GM12878 (cell line): ENCODE measurements at regions of chr6 and their contacts with region 1.

Region 1: DNA sequence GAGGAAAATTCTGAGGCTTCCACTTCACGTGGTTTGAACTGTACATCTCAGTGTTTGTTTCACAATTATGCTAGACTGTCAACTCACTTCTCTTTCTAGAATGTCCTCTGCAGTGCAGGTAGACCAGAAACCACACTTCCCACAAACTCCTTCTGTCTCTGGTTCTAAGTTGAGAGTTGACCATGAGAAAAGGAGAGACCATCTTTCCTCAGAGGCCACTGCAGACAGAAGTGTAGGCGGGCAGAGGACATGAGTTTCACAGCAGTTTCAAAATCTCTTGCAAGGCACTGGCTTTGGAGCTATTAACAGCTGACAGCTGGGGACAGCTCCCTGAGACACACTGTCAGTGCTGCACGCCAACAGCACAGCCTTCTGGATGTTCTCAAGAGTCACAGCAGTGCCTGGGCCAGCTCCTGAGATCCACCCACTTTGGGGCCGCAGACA is 55.4 kb upstream of the MOXD1 start:
- DNase-seq: peak; percentile 90
- ATAC-seq: peak; percentile 89
- H3K4me3 ChIP-seq: no peak overlapping the region
- H3K27ac ChIP-seq: no peak overlapping the region; the same call in 1 of the 2 replicates
- H3K4me1 ChIP-seq: peaks cover 33% of the 10 kb centered on the region
- H3K27me3 ChIP-seq: no peaks in the 10 kb centered on the region
- CTCF ChIP-seq: peak; percentile 45 to 62 (median 57); a peak in 5 of 6 replicates
- EP300 ChIP-seq: peak in 1 of 2 experiments; percentile 66; a peak in 2 of 4 replicates
- POLR2A ChIP-seq: no peak
- RAD21 ChIP-seq: peak; percentile 84

Region 2: GRCh38 chr6:132209351-132209750 is 247.4 kb before region 1 on chr6:
- CTCF ChIA-PET with region 1: no interaction called
- POLR2A ChIA-PET with region 1: no interaction called
- RAD21 ChIA-PET with region 1: no interaction called
- SMC1A ChIA-PET with region 1: no interaction called
- in situ Hi-C with region 1: no loop called
- intact Hi-C with region 1: no loop called
- DNase-seq: no peak
- ATAC-seq: no peak
- H3K4me3 ChIP-seq: no peak overlapping the region
- H3K27ac ChIP-seq: no peak overlapping the region
- H3K4me1 ChIP-seq: no peaks in the 10 kb centered on the region
- H3K27me3 ChIP-seq: peaks cover 0 to 1% of the 10 kb centered on the region in 2 experiments; a peak in 3 of 4 replicates
- CTCF ChIP-seq: no peak
- EP300 ChIP-seq: no peak
- POLR2A ChIP-seq: no peak
- RAD21 ChIP-seq: no peak

Region 3: DNA sequence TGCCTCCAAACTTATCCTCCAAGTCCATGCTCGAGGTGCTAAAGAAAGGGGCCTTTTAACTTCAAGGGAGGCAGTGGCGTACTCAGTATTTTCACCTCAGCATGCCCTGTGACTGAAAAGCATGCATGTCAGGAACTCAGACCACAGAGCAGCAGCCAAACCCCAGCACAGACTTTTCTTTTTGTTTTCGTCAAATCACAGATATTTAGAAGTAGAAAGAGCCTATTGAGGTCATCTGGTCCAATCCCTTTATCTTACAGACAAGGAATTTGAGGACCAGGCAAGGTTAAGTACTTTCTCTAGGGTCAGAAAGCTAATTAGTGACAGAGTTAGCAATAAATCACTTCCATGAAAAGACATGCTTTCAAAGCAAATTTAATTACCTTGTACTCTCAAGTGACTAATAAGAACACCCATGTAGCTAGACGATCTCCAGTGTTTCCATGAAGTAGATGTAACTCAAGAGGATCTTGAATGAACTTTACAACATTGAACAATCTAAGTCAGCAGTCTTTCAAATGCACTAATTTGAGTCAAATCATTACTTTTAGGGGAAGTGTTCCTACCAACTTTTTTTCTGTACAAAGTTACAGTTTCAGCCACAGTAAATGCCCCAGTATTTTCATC is 91.3 kb before region 1 on chr6:
- CTCF ChIA-PET with region 1: interaction called, 5 read pairs
- POLR2A ChIA-PET with region 1: no interaction called
- RAD21 ChIA-PET with region 1: interaction called, 3 read pairs
- SMC1A ChIA-PET with region 1: interaction called, 3 read pairs
- in situ Hi-C with region 1: no loop called
- intact Hi-C with region 1: loop called (anchors 1 kb)
- DNase-seq: peak; percentile 81
- ATAC-seq: peak; percentile 96
- H3K4me3 ChIP-seq: no peak overlapping the region
- H3K27ac ChIP-seq: 0 out of 2 replicates have a peak overlapping the region, but pooled peaks have one; percentile 35
- H3K4me1 ChIP-seq: peaks cover 17% of the 10 kb centered on the region; the same call in 1 of the 2 replicates
- H3K27me3 ChIP-seq: peaks cover 0 to 3% of the 10 kb centered on the region in 2 experiments; a peak in 2 of 4 replicates
- CTCF ChIP-seq: no peak
- EP300 ChIP-seq: peak; percentile 96 to 99
- POLR2A ChIP-seq: no peak
- RAD21 ChIP-seq: no peak

Region 4: GRCh38 chr6:132401120-132401945 is 55.4 kb before region 1 on chr6 and contains the start of gene MOXD1:
- CTCF ChIA-PET with region 1: interaction called, 13 read pairs
- POLR2A ChIA-PET with region 1: interaction called, 5 read pairs
- RAD21 ChIA-PET with region 1: no interaction called
- SMC1A ChIA-PET with region 1: no interaction called
- in situ Hi-C with region 1: no loop called
- intact Hi-C with region 1: loop called (anchors 2 kb)
- DNase-seq: no peak
- ATAC-seq: peak; percentile 66
- H3K4me3 ChIP-seq: peak within 1 kb of the TSS; percentile 74
- H3K27ac ChIP-seq: peak within 1 kb of the TSS; percentile 22
- H3K4me1 ChIP-seq: peaks cover 22% of the 10 kb centered on the region
- H3K27me3 ChIP-seq: peaks cover 0 to 5% of the 10 kb centered on the region in 2 experiments; a peak in 2 of 4 replicates
- CTCF ChIP-seq: no peak
- EP300 ChIP-seq: no peak
- POLR2A ChIP-seq: 0 out of 2 replicates have a peak, but pooled peaks have one; percentile 18
- RAD21 ChIP-seq: no peak
- polyA plus RNA-seq, gene MOXD1: 0.03 to 0.27 TPM

Region 5: DNA sequence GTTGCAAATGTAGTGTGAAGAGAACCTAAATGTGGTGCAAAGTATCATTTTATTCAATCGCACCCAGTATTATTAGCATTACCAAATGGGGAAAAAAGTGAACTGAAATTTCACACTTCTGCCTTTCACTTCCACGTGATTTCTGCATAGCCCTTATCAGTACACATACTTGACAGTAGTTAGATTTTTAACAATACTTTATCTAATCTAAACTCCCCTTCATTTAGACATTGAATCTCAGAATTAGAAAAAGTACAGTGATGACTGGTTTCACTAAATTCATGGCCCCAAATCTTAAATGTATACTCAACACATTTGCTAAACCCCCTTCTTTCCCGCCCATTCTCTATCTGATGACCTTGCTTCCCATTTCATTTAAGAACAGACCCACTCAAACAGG is 41.9 kb after region 1 on chr6:
- CTCF ChIA-PET with region 1: interaction called, 3 read pairs
- POLR2A ChIA-PET with region 1: no interaction called
- RAD21 ChIA-PET with region 1: interaction called, 7 read pairs
- SMC1A ChIA-PET with region 1: interaction called, 9 read pairs
- in situ Hi-C with region 1: no loop called
- intact Hi-C with region 1: loop called (anchors 5 kb)
- DNase-seq: peak; percentile 60
- ATAC-seq: peak; percentile 75
- H3K4me3 ChIP-seq: peak overlapping the region; percentile 22; the same call in 1 of the 2 replicates
- H3K27ac ChIP-seq: peak overlapping the region; percentile 76
- H3K4me1 ChIP-seq: peaks cover 53% of the 10 kb centered on the region
- H3K27me3 ChIP-seq: no peaks in the 10 kb centered on the region
- CTCF ChIP-seq: no peak
- EP300 ChIP-seq: peak; percentile 87 to 97
- POLR2A ChIP-seq: no peak
- RAD21 ChIP-seq: no peak

Region 6: DNA sequence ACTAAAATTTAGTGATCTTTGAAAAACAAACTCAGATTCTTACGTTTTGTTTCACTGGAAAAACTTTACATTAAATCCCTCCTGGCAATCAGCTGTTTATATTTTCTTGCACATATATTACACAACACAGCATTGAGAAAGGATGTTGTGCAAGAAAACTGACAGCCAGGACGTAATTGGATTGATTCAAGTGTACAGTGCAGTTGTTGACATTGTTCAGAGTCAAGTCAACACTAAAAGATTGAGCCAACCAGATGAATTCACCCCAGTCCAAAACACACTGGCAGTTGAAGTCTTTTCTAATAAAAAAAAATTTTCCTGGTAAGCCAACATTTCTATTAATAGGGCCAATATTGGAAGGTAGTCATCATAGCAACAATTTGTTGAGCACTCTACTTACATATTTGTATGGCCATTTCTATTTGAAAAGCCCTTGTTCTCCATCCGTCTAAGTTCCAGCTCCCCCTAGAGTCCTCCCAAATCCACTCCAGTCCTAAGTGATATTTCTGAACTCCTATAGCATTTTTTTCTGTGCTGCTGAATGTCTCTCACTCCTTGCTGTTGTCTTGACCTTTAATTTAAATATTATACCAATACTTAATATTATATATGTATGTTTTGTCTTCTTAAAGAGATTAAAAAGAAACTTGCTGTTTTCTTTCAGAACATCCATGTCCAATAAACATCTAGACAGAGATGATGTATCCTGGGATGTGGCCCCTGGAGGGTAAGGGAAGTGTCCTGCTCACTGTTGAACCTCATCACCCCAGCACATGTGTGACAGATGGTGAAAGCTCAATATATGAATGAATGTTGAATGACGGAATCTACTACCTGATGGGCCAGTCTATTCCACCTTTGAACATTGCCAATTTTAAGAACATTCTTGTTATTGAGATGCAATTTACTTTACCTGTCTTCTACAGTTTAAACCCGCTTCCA is 278.2 kb after region 1 on chr6:
- CTCF ChIA-PET with region 1: no interaction called
- POLR2A ChIA-PET with region 1: no interaction called
- RAD21 ChIA-PET with region 1: no interaction called
- SMC1A ChIA-PET with region 1: no interaction called
- in situ Hi-C with region 1: no loop called
- intact Hi-C with region 1: no loop called
- DNase-seq: no peak
- ATAC-seq: peak; percentile 31; the same call in 1 of the 3 replicates
- H3K4me3 ChIP-seq: no peak overlapping the region
- H3K27ac ChIP-seq: no peak overlapping the region
- H3K4me1 ChIP-seq: no peaks in the 10 kb centered on the region
- H3K27me3 ChIP-seq: no peaks in the 10 kb centered on the region
- CTCF ChIP-seq: peak in 1 of 3 experiments; percentile 25; a peak in 2 of 6 replicates
- EP300 ChIP-seq: no peak
- POLR2A ChIP-seq: no peak
- RAD21 ChIP-seq: no peak